ENCODE measurements at regions of chr12 and their contacts with region 1.

Region 1: GRCh38 chr12:58346032-58346632 is 404.8 kb downstream of the ATP23 start:
- DNase-seq: no peak
- H3K4me3 ChIP-seq: no peak overlapping the region
- H3K27ac ChIP-seq: no peak overlapping the region
- H3K4me1 ChIP-seq: no peaks in the 10 kb centered on the region
- H3K27me3 ChIP-seq: no peaks in the 10 kb centered on the region
- CTCF ChIP-seq: peak; percentile 58 to 84 (median 78)

Region 2: DNA sequence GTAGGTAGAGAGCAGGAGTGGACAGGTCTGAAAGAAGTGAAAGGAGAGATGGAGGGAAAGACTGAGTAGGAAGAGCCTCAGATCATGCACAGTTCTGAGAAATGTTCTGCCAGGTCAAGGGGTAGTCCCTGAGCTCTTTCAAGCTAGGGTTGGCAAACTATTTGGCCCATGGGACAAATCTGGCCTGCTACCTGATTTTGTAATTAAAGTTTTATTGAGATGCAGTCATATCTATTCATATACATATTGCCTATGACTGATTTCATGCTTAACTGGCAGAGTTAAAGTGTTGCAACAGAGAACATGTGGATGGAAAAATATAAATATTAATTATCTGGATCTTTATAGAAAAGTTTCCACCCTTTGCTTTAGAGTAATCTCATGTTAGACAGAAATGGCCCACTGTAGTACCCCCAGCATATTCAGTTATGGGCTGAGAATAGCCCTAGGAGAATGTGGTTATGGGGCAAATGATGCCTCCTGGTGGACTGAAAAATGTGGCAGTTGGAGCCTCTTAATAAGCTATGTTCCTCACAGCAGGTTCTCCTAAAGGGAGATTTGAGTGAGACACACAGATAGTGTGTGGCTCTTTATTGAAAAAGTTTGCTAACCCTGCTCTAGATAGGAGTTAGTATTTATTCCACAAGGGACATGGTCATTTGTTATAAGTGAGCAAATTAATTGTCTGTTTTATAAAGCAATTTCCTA is 97.3 kb after region 1 on chr12:
- intact Hi-C with region 1: loop called (anchors 10 kb)
- DNase-seq: no peak
- H3K4me3 ChIP-seq: no peak overlapping the region
- H3K27ac ChIP-seq: no peak overlapping the region
- H3K4me1 ChIP-seq: no peaks in the 10 kb centered on the region
- H3K27me3 ChIP-seq: no peaks in the 10 kb centered on the region
- CTCF ChIP-seq: peak; percentile 18 to 40 (median 20)

Region 3: GRCh38 chr12:58529897-58530741 is 184.0 kb after region 1 on chr12:
- intact Hi-C with region 1: loop called (anchors 10 kb)
- DNase-seq: no peak
- H3K4me3 ChIP-seq: no peak overlapping the region
- H3K27ac ChIP-seq: no peak overlapping the region
- H3K4me1 ChIP-seq: peaks cover 0 to 15% of the 10 kb centered on the region in 2 donors
- H3K27me3 ChIP-seq: no peaks in the 10 kb centered on the region
- CTCF ChIP-seq: no peak

Region 4: GRCh38 chr12:59087077-59087673 is 741.0 kb after region 1 on chr12:
- intact Hi-C with region 1: loop called (anchors 10 kb)
- DNase-seq: no peak
- H3K4me3 ChIP-seq: no peak overlapping the region
- H3K27ac ChIP-seq: no peak overlapping the region
- H3K4me1 ChIP-seq: peaks cover 0 to 6% of the 10 kb centered on the region in 2 donors
- H3K27me3 ChIP-seq: no peaks in the 10 kb centered on the region
- CTCF ChIP-seq: peak in 2 of 3 experiments; percentile 41 to 47

Region 5: GRCh38 chr12:59149997-59150642 is 804.0 kb after region 1 on chr12:
- intact Hi-C with region 1: loop called (anchors 10 kb)
- DNase-seq: no peak
- H3K4me3 ChIP-seq: no peak overlapping the region
- H3K27ac ChIP-seq: no peak overlapping the region
- H3K4me1 ChIP-seq: peaks cover 0 to 8% of the 10 kb centered on the region in 2 donors
- H3K27me3 ChIP-seq: no peaks in the 10 kb centered on the region
- CTCF ChIP-seq: peak; percentile 88 to 94 (median 93)